ENCODE measurements at regions of chrX and their contacts with region 1.

Region 1: GRCh38 chrX:115330498-115331168 is 41.1 kb downstream of the LUZP4 start:
- DNase-seq: peak; percentile 31 to 64 (median 47)
- H3K4me3 ChIP-seq: no peak overlapping the region
- H3K27ac ChIP-seq: no peak overlapping the region
- H3K4me1 ChIP-seq: no peaks in the 10 kb centered on the region
- H3K27me3 ChIP-seq: peaks cover 16% of the 10 kb centered on the region
- CTCF ChIP-seq: peak; percentile 68 to 91 (median 85)
- POLR2A ChIP-seq: no peak

Region 2: GRCh38 chrX:115560978-115561604 is 230.5 kb after region 1 on chrX and contains the start of gene PLS3:
- intact Hi-C with region 1: loop called in 1 of 2 experiments (anchors 10 kb)
- DNase-seq: peak; percentile 78 to 88 (median 83)
- H3K4me3 ChIP-seq: peak within 1 kb of the TSS; percentile 3 to 63 (median 40)
- H3K27ac ChIP-seq: peak within 1 kb of the TSS; percentile 56 to 82 (median 65)
- H3K4me1 ChIP-seq: no peaks in the 10 kb centered on the region
- H3K27me3 ChIP-seq: peaks cover 28% of the 10 kb centered on the region
- CTCF ChIP-seq: no peak
- POLR2A ChIP-seq: peak; percentile 35 to 74
- total RNA-seq, gene PLS3: 29.7 to 132 (median 57.5) TPM

Region 3: DNA sequence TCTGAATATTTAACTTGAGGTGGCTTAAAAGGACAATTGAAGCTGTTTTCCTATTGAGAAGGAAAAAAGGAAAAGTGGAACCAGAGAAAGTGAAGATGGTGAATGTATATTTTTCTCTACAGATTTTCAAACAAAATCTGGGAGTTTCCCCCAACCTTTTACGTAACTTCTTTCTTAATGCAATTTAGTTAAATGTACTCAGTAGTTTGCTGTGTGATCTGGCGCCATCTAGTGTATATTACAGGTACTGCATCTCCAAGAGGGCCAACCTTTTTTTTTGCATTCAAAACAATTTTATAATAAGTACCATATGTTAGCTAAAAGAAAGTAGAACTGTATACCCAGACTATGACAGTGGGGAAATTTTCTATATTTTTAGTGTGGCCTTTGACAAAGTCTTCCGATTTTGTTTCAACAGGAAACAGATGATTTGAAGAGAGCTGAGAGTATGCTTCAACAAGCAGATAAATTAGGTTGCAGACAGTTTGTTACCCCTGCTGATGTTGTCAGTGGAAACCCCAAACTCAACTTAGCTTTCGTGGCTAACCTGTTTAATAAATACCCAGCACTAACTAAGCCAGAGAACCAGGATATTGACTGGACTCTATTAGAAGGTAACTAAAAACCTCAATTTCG is 312.4 kb after region 1 on chrX:
- intact Hi-C with region 1: loop called (anchors 5 kb)
- DNase-seq: peak in 5 of 7 donors; percentile 34 to 62 (median 51)
- H3K4me3 ChIP-seq: no peak overlapping the region
- H3K27ac ChIP-seq: no peak overlapping the region
- H3K4me1 ChIP-seq: no peaks in the 10 kb centered on the region
- H3K27me3 ChIP-seq: peaks cover 7% of the 10 kb centered on the region
- CTCF ChIP-seq: peak; percentile 74 to 100 (median 87)
- POLR2A ChIP-seq: no peak

Region 4: GRCh38 chrX:115650916-115651315 is 320.3 kb after region 1 on chrX:
- intact Hi-C with region 1: loop called in 1 of 2 experiments (anchors 5 kb)
- DNase-seq: peak; percentile 33 to 58 (median 49)
- H3K4me3 ChIP-seq: no peak overlapping the region
- H3K27ac ChIP-seq: no peak overlapping the region
- H3K4me1 ChIP-seq: peaks cover 0 to 11% of the 10 kb centered on the region in 2 donors
- H3K27me3 ChIP-seq: no peaks in the 10 kb centered on the region
- CTCF ChIP-seq: peak; percentile 47 to 65 (median 58)
- POLR2A ChIP-seq: no peak